KBM-7 (cell line): ENCODE measurements at regions of chr9 and their contacts with region 1.

Region 1: GRCh38 chr9:4489919-4490704 is at the start of gene SLC1A1:
- DNase-seq: peak; percentile 52

Region 2: GRCh38 chr9:4596165-4596922 is 106.2 kb after region 1 on chr9:
- in situ Hi-C with region 1: loop called (anchors 25 kb)
- DNase-seq: no peak

Region 3: GRCh38 chr9:4620057-4620760 is 130.1 kb after region 1 on chr9:
- in situ Hi-C with region 1: no loop called
- DNase-seq: peak; percentile 48